Dendritic cell treated with granulocyte-macrophage colony-stimulating factor and Interleukin-4, amounts not matched to agents 40 ng/mL and 50 ng/mL, for 4 days (primary cell): ENCODE measurements at regions of chr12 and their contacts with region 1.

Region 1: DNA sequence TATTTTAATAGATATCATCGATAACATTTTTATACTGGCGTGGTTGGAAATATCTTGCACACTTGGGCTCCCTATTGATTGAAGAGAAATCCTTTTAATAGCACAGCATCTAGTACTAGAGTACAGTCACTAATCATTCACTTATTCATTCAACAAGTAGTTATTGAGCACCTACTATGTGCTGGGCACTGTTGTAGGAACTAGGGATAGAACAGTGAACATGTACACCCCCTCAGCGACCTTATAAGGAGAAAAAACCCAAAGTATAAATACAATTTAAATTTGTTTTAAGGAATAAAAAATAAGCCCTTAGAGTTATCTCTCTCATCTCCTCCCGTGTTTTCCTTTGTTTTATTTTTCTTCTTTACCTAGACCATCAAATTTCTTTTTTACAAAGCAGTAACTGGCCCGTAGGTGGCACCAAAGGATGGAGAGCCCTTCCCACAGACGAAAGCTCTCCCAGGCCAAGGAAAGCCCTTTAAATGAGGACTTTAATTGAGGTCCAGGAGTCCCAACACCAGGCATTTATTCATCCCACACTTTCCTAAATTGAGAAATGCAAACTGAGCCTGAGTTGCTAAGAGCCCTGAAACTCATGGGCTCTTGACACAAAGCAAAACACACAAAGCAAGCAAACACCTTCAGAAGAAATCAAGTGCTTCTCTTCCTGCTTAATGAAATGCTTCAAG is 29.0 kb downstream of the PEBP1 start:
- H3K4me3 Mint-ChIP-seq: no peak overlapping the region
- H3K27ac Mint-ChIP-seq: no peak overlapping the region
- H3K4me1 Mint-ChIP-seq: peaks cover 34% of the 10 kb centered on the region
- H3K27me3 Mint-ChIP-seq: no peaks in the 10 kb centered on the region

Region 2: GRCh38 chr12:118126119-118126757 is 38.7 kb before region 1 on chr12:
- intact Hi-C with region 1: no loop called
- H3K4me3 Mint-ChIP-seq: no peak overlapping the region
- H3K27ac Mint-ChIP-seq: no peak overlapping the region
- H3K4me1 Mint-ChIP-seq: no peaks in the 10 kb centered on the region
- H3K27me3 Mint-ChIP-seq: no peaks in the 10 kb centered on the region

Region 3: GRCh38 chr12:118175823-118176447 is 11.0 kb after region 1 on chr12:
- intact Hi-C with region 1: loop called (anchors 1 kb)
- H3K4me3 Mint-ChIP-seq: no peak overlapping the region
- H3K27ac Mint-ChIP-seq: peak overlapping the region; percentile 53
- H3K4me1 Mint-ChIP-seq: peaks cover 42% of the 10 kb centered on the region
- H3K27me3 Mint-ChIP-seq: no peaks in the 10 kb centered on the region

Region 4: DNA sequence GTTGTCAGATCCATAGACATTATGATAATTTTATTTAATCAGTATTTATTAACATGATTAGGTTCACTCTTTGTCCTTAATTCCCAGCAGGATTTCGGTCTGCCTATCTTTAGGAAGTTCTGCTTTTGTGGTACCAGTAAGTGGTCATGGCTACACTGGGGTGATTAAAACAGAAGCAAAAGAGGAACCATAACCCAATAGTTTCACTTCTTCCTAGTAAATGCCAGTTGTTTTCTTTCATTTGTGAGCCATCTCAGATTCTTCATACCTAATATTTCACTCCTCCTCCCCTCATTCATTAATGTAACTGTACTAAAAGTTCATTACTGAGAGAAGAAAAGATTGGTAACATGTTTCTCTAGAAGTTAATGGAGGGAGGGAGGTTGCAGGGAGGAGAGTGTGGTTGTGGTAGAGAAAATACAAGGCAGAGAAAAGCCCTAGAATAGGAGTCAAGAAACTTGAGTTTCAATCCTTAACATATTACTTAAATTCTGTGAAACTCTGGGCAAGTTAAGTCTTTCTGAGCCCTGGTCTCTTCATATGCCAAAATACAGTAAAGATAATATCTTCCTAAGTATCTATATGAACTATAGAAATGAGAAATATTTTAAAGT is 72.2 kb after region 1 on chr12:
- intact Hi-C with region 1: loop called (anchors 5 kb)
- H3K4me3 Mint-ChIP-seq: peak overlapping the region; percentile 17
- H3K27ac Mint-ChIP-seq: peak overlapping the region; percentile 81
- H3K4me1 Mint-ChIP-seq: peaks cover 30% of the 10 kb centered on the region
- H3K27me3 Mint-ChIP-seq: no peaks in the 10 kb centered on the region